Activated B cell treated with CpG ODN at 0.5 μM for 24 hours (primary cell): ENCODE measurements at regions of chr4 and their contacts with region 1.

Region 1: DNA sequence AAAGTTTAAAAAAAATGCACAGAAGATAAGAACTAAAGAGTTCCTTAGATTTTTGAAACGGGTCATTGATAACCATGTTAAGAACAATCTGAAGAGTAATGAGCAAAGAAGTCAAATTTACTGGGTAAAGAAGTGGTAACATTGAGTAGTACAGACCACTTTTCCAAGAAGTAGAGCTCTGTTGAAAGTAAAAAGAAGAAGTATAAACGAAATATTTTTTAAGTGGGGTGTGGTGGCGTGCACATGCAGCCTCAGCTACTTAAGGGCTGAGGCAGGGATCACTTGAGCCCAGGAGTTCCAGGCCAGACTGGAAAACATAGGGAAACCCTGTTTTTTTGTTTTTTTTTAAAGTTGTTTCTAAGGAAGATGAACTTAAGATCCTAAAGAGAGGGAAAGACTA is 68.5 kb downstream of the UBA6 start:
- DNase-seq: no peak
- ATAC-seq: peak; percentile 96
- H3K4me3 Mint-ChIP-seq: peak overlapping the region; percentile 64
- H3K27ac Mint-ChIP-seq: peak overlapping the region; percentile 72
- H3K4me1 Mint-ChIP-seq: peaks cover 19% of the 10 kb centered on the region
- H3K27me3 Mint-ChIP-seq: no peaks in the 10 kb centered on the region
- CTCF ChIP-seq: no peak

Region 2: GRCh38 chr4:67575232-67575888 is 57.1 kb before region 1 on chr4:
- CTCF ChIA-PET with region 1: no interaction called
- POLR2A ChIA-PET with region 1: no interaction called
- intact Hi-C with region 1: loop called (anchors 2 kb)
- DNase-seq: no peak
- ATAC-seq: peak; percentile 91
- H3K4me3 Mint-ChIP-seq: peak overlapping the region; percentile 71
- H3K27ac Mint-ChIP-seq: peak overlapping the region; percentile 90
- H3K4me1 Mint-ChIP-seq: peaks cover 68% of the 10 kb centered on the region
- H3K27me3 Mint-ChIP-seq: no peaks in the 10 kb centered on the region
- CTCF ChIP-seq: no peak

Region 3: DNA sequence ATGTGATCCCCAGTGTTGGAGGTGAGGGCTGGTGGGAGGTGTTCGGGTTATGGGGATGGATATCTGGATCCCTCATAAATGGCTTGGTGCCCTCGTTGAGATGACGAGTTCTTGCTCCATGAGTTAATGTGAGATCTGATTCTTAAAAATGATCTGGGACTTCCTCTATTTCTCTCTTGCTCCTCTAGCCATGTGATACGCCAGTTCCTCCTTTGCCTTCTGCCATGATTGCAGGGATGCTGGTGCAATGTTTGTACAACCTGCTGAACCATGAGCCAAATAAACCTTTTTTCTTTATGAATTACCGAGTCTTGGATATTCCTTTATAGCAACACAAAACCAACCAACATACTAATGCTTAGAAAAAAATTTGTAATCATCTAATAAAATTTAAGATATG is 17.4 kb before region 1 on chr4:
- CTCF ChIA-PET with region 1: no interaction called
- POLR2A ChIA-PET with region 1: no interaction called
- intact Hi-C with region 1: no loop called
- DNase-seq: no peak
- ATAC-seq: no peak
- H3K4me3 Mint-ChIP-seq: no peak overlapping the region
- H3K27ac Mint-ChIP-seq: peak overlapping the region; percentile 43
- H3K4me1 Mint-ChIP-seq: peaks cover 3% of the 10 kb centered on the region
- H3K27me3 Mint-ChIP-seq: no peaks in the 10 kb centered on the region
- CTCF ChIP-seq: no peak

Region 4: GRCh38 chr4:67684839-67685531 is 52.5 kb after region 1 on chr4:
- CTCF ChIA-PET with region 1: no interaction called
- POLR2A ChIA-PET with region 1: no interaction called
- intact Hi-C with region 1: loop called (anchors 5 kb)
- DNase-seq: no peak
- ATAC-seq: no peak
- H3K4me3 Mint-ChIP-seq: no peak overlapping the region
- H3K27ac Mint-ChIP-seq: no peak overlapping the region
- H3K4me1 Mint-ChIP-seq: no peaks in the 10 kb centered on the region
- H3K27me3 Mint-ChIP-seq: no peaks in the 10 kb centered on the region
- CTCF ChIP-seq: no peak